Activated B cell treated with CpG ODN at 0.5 μM for 24 hours (primary cell): ENCODE measurements at regions of chr21 and their contacts with region 1.

Region 1: GRCh38 chr21:16330082-16330907 is 600.5 kb downstream of the USP25 start:
- DNase-seq: no peak
- ATAC-seq: peak; percentile 56
- H3K4me3 Mint-ChIP-seq: no peak overlapping the region
- H3K27ac Mint-ChIP-seq: no peak overlapping the region
- H3K4me1 Mint-ChIP-seq: no peaks in the 10 kb centered on the region
- H3K27me3 Mint-ChIP-seq: no peaks in the 10 kb centered on the region
- CTCF ChIP-seq: peak; percentile 25

Region 2: DNA sequence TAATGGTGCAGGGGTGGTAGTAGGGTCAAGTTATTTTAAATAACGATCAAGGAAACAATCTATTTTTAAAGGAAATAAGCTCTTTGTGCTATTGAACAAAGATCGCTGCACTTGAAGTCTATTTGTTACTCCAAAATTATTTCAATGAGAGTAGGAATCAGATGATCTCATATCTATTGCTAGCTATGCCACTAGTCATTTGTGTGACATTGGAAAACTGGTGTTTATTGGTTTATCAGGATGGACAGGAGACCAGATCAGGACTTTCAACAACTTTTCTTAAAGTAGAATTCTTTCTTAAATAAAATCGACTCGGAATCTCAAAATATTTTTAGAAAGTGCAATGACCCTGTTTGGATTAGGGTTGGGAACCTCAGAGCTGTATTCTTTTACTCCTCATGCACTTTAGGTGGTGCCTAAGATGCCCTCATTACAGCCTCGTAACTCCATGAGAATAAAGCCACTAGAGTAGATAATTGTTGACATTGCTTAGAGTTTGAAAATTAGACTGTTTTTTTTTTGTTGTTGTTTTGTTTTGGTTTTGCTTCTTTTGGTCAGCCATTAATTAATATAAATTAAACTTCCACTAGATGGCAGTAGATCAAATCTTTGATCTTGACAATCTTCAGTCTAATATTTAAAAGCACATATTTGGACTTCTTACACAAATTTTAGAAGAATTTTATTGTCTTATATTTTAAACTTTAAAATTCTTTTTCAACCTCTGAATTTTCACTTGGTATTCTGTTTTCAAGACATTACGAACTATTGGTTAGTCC is 248.1 kb before region 1 on chr21:
- CTCF ChIA-PET with region 1: interaction called, 5 read pairs
- POLR2A ChIA-PET with region 1: no interaction called
- intact Hi-C with region 1: loop called (anchors 1 kb)
- DNase-seq: no peak
- ATAC-seq: no peak
- H3K4me3 Mint-ChIP-seq: no peak overlapping the region
- H3K27ac Mint-ChIP-seq: no peak overlapping the region
- H3K4me1 Mint-ChIP-seq: no peaks in the 10 kb centered on the region
- H3K27me3 Mint-ChIP-seq: no peaks in the 10 kb centered on the region
- CTCF ChIP-seq: no peak

Region 3: DNA sequence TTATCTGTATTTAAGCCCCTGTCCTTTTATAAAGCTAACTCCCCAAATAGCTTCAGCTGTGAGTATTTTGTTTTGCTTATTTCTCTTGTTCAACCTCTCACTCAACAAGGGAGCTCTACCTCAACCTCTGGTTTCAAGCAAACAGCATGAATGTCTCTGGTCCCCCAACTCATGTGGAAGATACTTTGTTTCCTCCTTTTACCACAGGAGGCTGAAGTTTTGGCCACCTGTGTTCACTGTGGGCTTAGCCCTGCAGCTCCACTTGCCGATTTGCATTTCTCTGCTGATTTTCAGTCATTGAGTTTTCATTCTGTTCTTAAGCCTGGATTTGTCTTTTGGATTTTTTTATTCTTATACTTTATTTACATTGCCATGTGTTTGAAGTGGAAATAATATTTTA is 12.6 kb after region 1 on chr21:
- CTCF ChIA-PET with region 1: interaction called, 3 read pairs
- POLR2A ChIA-PET with region 1: no interaction called
- intact Hi-C with region 1: loop called (anchors 1 kb)
- DNase-seq: no peak
- ATAC-seq: no peak
- H3K4me3 Mint-ChIP-seq: no peak overlapping the region
- H3K27ac Mint-ChIP-seq: no peak overlapping the region
- H3K4me1 Mint-ChIP-seq: no peaks in the 10 kb centered on the region
- H3K27me3 Mint-ChIP-seq: no peaks in the 10 kb centered on the region
- CTCF ChIP-seq: no peak